ENCODE measurements at regions of chr3 and their contacts with region 1.

Region 1: DNA sequence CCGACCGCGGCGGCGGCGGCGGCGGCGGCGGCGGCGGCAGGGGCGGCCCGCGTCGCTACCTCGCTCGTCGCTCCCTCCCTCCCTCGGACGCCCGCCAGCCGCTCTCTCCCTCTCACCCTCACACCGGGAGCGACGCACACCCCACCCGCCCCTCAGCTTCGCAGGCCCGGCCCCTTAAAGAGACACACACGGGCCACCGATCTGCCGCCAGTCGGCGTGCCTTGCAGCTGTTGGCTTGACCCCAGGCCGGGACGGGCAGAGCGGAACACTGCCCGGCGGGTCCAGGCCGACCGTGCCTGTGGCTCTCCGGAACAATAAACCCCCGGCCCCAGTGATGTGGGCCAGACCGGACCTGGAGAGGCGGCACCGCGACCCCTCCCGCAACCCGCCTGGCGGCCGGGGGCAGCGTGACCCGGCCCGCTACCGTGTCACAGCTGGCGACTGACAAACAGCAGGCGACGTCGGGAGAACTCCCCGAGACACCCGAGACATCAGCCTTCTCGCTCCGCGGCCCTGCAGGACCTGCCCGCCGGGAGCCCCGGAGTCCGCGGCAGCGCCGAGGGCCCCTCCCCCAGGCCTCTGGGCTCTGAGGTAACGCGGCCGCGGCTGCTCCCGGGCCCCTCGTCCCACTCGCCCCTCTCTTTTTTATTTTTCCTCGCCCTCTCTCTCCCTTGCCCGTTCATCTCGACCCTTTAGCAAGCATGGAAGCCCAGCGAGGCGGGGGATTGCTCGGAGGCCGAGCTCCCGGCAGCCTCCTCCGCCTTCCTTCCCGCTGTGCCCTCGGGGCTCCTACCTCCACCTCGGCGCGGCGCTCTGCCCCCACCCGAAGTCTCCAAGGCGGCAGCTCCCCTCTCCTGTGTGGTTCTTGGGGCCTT is at the start of gene SETD2:
- DNase-seq: peak; percentile 95
- H3K4me3 ChIP-seq: peak within 1 kb of the TSS; percentile 77 to 88
- H3K27ac ChIP-seq: peak within 1 kb of the TSS; percentile 95 to 96
- H3K4me1 ChIP-seq: peaks cover 4% of the 10 kb centered on the region
- H3K27me3 ChIP-seq: no peaks in the 10 kb centered on the region
- CTCF ChIP-seq: peak in 3 of 4 experiments; percentile 34 to 67 (median 59)
- POLR2A ChIP-seq: peak; percentile 58
- total RNA-seq, gene SETD2: 49.8 to 56.2 TPM

Region 2: GRCh38 chr3:46976326-46977190 is 187.7 kb before region 1 on chr3 and contains the start of gene CCDC12:
- intact Hi-C with region 1: loop called (anchors 5 kb)
- DNase-seq: peak; percentile 98
- H3K4me3 ChIP-seq: peak within 1 kb of the TSS; percentile 61 to 66
- H3K27ac ChIP-seq: peak within 1 kb of the TSS; percentile 93
- H3K4me1 ChIP-seq: peaks cover 3% of the 10 kb centered on the region
- H3K27me3 ChIP-seq: no peaks in the 10 kb centered on the region
- CTCF ChIP-seq: peak in 2 of 4 experiments; percentile 16 to 26
- POLR2A ChIP-seq: peak; percentile 69
- total RNA-seq, gene CCDC12: 34.6 to 78.7 TPM

Region 3: GRCh38 chr3:47073685-47074084 is 90.6 kb before region 1 on chr3:
- intact Hi-C with region 1: no loop called
- DNase-seq: no peak
- H3K4me3 ChIP-seq: no peak overlapping the region
- H3K27ac ChIP-seq: no peak overlapping the region
- H3K4me1 ChIP-seq: no peaks in the 10 kb centered on the region
- H3K27me3 ChIP-seq: no peaks in the 10 kb centered on the region
- CTCF ChIP-seq: no peak
- POLR2A ChIP-seq: no peak

Region 4: DNA sequence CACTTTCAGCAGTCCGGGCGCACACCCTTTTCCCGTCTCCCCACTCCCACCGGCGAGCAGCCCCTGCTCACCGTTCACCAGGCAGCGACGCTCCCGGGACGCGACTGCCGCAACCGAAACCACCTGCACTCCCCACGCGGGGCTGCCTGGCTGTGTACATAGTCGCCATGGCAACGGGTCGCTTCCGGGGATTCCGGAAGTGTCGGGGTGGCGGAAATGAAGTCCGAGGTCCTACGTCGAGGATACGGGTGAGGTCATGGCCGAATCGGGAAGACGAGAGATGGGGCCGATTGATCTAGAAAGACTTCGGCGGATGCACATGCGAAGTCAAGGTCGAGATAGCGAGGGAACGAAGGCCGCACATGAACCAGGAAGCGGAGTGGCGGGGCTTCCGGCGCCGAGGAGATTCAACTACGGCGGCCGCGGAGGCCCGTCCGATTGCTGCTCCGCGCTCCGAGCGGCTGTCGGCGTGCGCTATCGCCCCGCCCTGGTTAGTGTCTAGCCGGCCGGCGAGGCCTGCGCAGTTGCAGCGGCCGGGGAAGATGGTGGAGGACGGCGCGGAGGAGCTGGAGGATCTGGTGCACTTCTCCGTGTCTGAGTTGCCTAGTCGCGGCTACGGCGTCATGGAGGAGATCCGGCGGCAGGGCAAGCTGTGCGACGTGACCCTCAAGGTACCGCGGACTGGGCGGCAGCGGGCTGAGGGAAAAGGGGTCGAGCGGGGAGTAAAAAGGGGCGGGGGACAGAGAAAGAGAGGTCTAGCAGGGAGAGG is 118.4 kb after region 1 on chr3 and contains the starts of genes KIF9 and KLHL18:
- intact Hi-C with region 1: loop called (anchors 5 kb)
- DNase-seq: peak; percentile 93
- H3K4me3 ChIP-seq: peak within 1 kb of the TSS; percentile 55 to 68
- H3K27ac ChIP-seq: peak within 1 kb of the TSS; percentile 94 to 96
- H3K4me1 ChIP-seq: no peaks in the 10 kb centered on the region
- H3K27me3 ChIP-seq: no peaks in the 10 kb centered on the region
- CTCF ChIP-seq: peak in 2 of 4 experiments; percentile 21 to 22
- POLR2A ChIP-seq: peak; percentile 11
- total RNA-seq, gene KIF9: 14.3 to 17.5 TPM
- total RNA-seq, gene KLHL18: 10.8 to 18.6 TPM

Region 5: DNA sequence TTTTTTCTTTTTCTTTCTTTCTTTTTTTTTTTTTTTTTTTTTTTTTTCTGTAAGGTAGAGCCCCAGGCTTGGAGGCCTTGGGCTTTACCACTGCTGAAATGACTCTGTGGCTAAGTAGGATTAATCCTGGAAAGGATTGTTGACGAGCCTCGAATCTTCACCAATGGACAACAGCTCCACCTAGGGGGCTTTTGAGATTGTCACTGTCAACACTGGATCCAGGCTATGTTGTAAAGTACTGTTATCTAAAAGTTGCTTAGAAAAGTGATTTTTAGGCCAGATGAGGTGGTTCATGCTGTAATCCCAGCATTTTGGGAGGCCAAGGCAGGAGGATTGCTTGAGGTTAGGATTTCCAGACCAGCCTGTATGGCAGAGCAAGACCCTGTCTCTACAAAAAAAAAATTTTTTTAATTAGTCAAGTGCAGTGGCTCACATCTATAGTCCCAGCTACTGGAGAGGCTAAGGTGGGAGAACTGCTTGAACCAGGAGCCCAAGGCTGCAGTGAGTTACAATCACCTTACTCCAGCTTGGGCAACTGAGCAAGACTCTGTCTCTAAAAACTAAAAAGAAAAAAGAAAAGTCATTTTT is 160.1 kb after region 1 on chr3:
- intact Hi-C with region 1: loop called (anchors 10 kb)
- DNase-seq: peak; percentile 56
- H3K4me3 ChIP-seq: no peak overlapping the region
- H3K27ac ChIP-seq: no peak overlapping the region
- H3K4me1 ChIP-seq: no peaks in the 10 kb centered on the region
- H3K27me3 ChIP-seq: no peaks in the 10 kb centered on the region
- CTCF ChIP-seq: peak; percentile 19 to 77 (median 59)
- POLR2A ChIP-seq: no peak

Measured in prostate gland (tissue), 2 donors.